Activated CD8-positive, alpha-beta T cell treated with anti-CD3 and anti-CD28 coated beads for 36 hours (primary cell): ENCODE measurements at regions of chr2 and their contacts with region 1.

Region 1: DNA sequence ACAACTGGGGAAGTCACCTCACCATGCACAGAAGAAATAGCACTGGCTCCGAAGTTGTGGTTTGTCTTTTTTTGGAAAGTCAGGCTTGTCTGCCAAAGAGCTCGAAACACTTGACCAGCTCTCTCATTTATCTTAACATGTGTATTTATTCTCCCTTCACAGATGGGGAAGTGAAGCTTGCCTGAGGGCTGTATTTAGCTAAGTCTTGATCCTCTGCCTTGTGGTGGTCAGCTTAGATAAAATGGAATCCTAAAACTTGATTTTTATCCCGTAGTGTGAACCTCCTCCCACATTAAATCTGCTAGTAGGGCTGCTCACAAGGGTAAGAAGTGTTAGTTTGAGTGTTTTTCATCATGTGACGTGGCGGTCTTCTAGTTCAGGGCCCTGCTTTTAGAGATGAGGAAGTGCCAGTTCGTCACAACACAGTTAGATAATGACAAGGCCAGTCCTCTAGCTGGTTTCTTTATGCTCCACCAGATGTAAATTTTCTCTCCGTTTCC is 89.7 kb downstream of the TMEM247 start:
- DNase-seq: no peak
- ATAC-seq: no peak
- H3K4me3 Mint-ChIP-seq: no peak overlapping the region
- H3K27ac Mint-ChIP-seq: no peak overlapping the region
- H3K4me1 Mint-ChIP-seq: peaks cover 4% of the 10 kb centered on the region
- H3K27me3 Mint-ChIP-seq: no peaks in the 10 kb centered on the region
- CTCF ChIP-seq: no peak

Region 2: DNA sequence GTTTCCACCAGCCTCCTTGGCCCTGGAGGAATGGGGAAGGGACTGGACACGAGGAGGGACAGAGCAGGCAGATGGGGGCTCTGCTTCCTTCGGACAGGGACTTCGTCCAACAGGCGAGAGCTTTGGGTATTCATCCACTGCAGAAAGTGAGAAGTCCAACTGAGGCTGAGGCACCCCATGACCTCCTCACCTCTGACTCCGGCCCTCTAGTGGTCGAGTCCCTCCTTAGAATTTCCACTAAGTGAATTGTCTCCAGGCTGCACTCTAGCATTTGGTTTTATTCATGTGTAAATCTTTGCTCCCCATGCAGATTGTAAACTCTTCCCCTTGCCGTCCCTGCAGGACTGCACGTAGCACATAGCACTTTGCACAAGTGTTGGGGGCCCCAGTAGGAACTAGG is 14.1 kb before region 1 on chr2:
- CTCF ChIA-PET with region 1: interaction called, 14 read pairs
- POLR2A ChIA-PET with region 1: no interaction called
- intact Hi-C with region 1: no loop called
- DNase-seq: peak; percentile 55
- ATAC-seq: peak; percentile 60
- H3K4me3 Mint-ChIP-seq: no peak overlapping the region
- H3K27ac Mint-ChIP-seq: no peak overlapping the region
- H3K4me1 Mint-ChIP-seq: peaks cover 21% of the 10 kb centered on the region
- H3K27me3 Mint-ChIP-seq: no peaks in the 10 kb centered on the region
- CTCF ChIP-seq: peak; percentile 69